Activated CD4-positive, alpha-beta T cell treated with anti-CD3 and anti-CD28 coated beads for 36 hours (primary cell): ENCODE measurements at regions of chr1 and their contacts with region 1.

Region 1: DNA sequence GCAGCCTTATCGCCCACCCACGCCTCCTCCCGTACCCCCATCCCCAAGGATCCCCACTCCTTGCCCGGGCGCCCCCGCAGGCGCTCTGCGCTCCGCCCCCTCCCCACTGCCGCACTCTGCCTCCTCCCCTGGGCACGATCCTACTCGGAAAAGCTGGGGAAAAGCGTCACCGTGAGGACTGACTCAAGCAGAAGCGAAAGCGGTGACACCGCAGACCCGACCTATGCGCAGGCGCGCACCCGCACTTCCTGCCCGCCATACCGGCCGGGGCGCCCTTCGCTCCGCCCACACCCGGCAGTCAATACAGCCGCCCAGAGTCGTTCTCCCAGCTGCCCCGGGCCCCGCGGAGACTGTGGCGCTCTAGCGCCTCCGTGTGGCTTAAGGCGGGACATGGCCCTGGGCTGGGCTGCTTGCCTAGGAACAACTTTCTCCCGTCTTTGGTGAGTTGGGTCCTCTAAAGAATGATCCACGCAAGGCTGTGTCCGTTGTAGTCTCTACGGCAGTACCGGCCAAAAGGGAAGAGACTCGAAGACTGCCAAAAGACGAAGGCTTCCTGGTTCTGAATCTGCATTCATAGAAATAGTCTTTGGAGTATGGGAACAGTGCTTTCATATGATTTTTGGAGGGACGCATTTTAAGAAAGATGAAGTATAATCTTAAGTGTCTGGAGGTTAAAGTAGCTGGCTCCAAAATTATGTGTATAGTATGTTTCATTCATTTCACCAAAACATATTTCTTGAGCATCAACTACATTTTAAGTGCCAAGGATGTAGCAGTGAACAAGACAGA is at the start of gene OMA1:
- DNase-seq: peak; percentile 97
- ATAC-seq: peak; percentile 93
- H3K4me3 Mint-ChIP-seq: peak within 1 kb of the TSS; percentile 86
- H3K27ac Mint-ChIP-seq: peak within 1 kb of the TSS; percentile 96
- H3K4me1 Mint-ChIP-seq: peaks cover 18% of the 10 kb centered on the region
- H3K27me3 Mint-ChIP-seq: peaks cover 1% of the 10 kb centered on the region
- total RNA-seq, gene OMA1: 8.8 to 11.6 TPM

Region 2: GRCh38 chr1:56831871-56832693 is 1714.6 kb before region 1 on chr1:
- CTCF ChIA-PET with region 1: no interaction called
- POLR2A ChIA-PET with region 1: no interaction called
- intact Hi-C with region 1: loop called in 1 of 2 experiments (anchors 1 kb)
- DNase-seq: peak; percentile 80
- ATAC-seq: peak; percentile 60
- H3K4me3 Mint-ChIP-seq: no peak overlapping the region
- H3K27ac Mint-ChIP-seq: no peak overlapping the region
- H3K4me1 Mint-ChIP-seq: peaks cover 3% of the 10 kb centered on the region
- H3K27me3 Mint-ChIP-seq: peaks cover 6% of the 10 kb centered on the region

Region 3: DNA sequence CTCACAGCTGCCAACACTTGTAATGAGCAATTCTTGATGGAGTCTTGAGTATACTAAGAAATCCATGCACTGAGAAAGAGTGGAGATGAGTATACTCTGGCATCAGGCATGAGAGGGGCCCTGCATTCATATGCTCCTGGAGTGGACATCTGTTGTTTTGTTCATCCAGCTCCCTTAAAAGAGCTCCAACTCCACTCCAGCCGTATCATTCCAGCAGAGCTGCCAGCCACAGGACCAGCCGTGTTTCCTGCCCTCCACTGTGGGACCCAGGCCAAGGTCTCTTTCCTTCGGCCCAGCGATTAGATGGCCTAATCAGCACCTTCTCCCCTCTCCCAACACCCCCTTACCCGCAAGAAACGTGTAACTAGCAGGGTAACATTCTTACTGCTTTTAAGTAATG is 144.7 kb before region 1 on chr1:
- CTCF ChIA-PET with region 1: no interaction called
- POLR2A ChIA-PET with region 1: no interaction called
- intact Hi-C with region 1: no loop called
- DNase-seq: no peak
- ATAC-seq: no peak
- H3K4me3 Mint-ChIP-seq: no peak overlapping the region
- H3K27ac Mint-ChIP-seq: no peak overlapping the region
- H3K4me1 Mint-ChIP-seq: no peaks in the 10 kb centered on the region
- H3K27me3 Mint-ChIP-seq: no peaks in the 10 kb centered on the region

Region 4: DNA sequence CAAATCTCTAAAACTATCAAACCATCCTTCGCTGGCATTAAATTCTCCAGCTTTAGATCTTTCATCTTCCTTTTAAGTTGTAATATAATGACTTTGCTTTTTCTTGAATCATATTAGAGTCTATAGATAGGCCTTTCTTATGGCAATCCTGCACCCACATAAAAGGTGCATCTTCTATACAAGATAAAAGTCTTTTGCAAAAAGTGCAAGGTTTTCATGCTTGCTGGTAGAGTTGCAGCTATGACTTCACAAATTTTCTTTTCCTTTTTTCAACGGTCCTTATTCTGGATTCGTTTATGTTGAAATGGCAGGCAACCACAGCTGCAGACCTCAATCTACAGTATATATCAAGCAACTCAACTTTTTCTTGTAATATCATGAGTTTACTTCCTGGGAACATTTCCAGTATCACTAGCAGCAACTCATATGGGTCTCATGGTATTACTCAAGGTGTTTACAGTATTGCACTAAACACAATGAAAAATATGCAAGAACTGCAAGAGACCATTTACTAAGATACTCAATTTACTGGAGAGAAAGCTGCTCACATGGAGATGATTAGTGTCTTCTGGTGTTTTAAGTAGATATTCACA is 22.3 kb before region 1 on chr1:
- CTCF ChIA-PET with region 1: interaction called, 95 read pairs
- POLR2A ChIA-PET with region 1: no interaction called
- intact Hi-C with region 1: loop called in 1 of 2 experiments (anchors 2 kb)
- DNase-seq: peak; percentile 45
- ATAC-seq: peak; percentile 78
- H3K4me3 Mint-ChIP-seq: no peak overlapping the region
- H3K27ac Mint-ChIP-seq: peak overlapping the region; percentile 31
- H3K4me1 Mint-ChIP-seq: peaks cover 23% of the 10 kb centered on the region
- H3K27me3 Mint-ChIP-seq: no peaks in the 10 kb centered on the region

Region 5: GRCh38 chr1:58652651-58653184 is 106.0 kb after region 1 on chr1:
- CTCF ChIA-PET with region 1: interaction called, 14 read pairs
- POLR2A ChIA-PET with region 1: no interaction called
- intact Hi-C with region 1: loop called (anchors 1 kb)
- DNase-seq: peak; percentile 73
- ATAC-seq: peak; percentile 93
- H3K4me3 Mint-ChIP-seq: no peak overlapping the region
- H3K27ac Mint-ChIP-seq: no peak overlapping the region
- H3K4me1 Mint-ChIP-seq: peaks cover 12% of the 10 kb centered on the region
- H3K27me3 Mint-ChIP-seq: no peaks in the 10 kb centered on the region

Region 6: DNA sequence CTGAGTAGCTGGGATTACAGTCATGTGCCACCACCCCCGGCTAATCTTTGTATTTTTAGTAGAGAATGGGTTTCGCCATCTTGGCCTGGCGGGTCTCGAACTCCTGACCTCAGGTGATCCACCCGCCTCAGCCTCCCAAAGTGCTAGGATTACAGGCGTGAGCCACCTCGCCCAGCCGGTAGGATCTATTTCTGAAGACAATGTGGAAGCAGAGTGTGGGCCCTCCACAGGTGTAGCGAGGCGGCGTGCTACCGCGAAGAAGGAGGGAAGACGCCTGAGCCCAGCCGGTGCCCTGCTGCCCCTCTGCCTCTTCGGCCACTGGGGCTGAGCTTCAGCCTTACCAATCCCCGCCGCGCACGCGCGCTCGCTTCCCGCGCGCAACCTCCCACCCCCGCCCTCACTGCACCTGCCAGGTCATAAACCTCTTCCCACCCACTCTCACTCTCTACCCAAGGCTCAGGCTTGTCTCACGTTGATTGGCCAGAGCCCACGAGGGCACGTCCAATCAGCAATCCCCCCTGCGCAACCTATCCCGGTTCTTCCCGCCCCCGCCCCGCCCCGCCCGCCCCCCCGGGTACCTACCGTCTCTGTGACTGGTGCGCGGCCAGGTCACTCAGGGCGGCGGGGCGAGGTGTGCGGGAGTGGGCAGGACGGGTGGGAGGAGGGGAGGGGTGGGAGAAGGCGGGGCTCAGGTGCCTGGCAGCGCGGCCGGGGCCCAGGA is 1267.6 kb after region 1 on chr1:
- CTCF ChIA-PET with region 1: no interaction called
- POLR2A ChIA-PET with region 1: no interaction called
- intact Hi-C with region 1: loop called (anchors 1 to 10 kb)
- DNase-seq: peak; percentile 92
- ATAC-seq: peak; percentile 96
- H3K4me3 Mint-ChIP-seq: no peak overlapping the region
- H3K27ac Mint-ChIP-seq: peak overlapping the region; percentile 73
- H3K4me1 Mint-ChIP-seq: peaks cover 8% of the 10 kb centered on the region
- H3K27me3 Mint-ChIP-seq: peaks cover 5% of the 10 kb centered on the region